Activated naive CD4-positive, alpha-beta T cell treated with anti-CD3 and anti-CD28 coated beads, Interleukin-2, amount 10 ng/mL, durations not matched to agents 7 days and 5 days (primary cell): ENCODE measurements at regions of chr4 and their contacts with region 1.

Region 1: DNA sequence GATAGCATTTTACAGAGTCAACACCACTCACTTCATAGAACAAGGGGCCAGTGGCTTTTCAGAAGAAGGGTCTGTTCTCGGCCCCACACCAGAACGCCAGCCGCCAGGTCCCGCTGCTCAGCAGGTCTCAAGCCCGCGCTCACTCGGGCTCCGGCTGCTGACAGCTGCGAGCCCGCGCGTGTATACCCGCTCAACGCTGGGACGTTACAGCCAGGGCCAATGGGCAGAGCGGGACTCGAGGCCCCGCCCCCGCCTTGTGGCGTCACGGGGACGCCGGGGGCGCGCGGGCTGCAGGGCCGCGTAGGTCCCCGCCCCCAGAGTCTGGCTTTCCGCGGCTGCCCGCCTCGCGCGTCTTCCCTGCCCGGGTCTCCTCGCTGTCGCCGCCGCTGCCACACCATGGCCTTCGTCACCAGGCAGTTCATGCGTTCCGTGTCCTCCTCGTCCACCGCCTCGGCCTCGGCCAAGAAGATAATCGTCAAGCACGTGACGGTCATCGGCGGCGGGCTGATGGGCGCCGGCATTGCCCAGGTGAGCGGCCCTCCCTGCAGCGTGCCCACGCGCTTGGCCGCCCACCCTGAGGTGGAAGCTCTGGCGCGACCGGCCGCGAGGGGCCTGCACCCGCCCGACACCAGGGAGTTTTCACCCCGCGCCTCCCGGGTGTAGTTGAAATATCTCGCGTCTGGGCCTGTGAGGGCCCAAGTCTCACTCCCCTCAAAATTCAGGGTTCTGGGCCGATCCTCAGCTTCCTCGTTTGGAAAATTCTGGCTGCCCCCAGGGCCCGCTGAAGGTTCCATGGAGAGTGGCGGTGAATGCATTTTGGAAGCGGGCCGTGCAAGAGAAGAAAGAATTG is at the start of gene HADH:
- DNase-seq: peak; percentile 95
- H3K4me3 Mint-ChIP-seq: peak within 1 kb of the TSS; percentile 95
- H3K27ac Mint-ChIP-seq: peak within 1 kb of the TSS; percentile 93
- H3K4me1 Mint-ChIP-seq: peaks cover 46% of the 10 kb centered on the region
- H3K27me3 Mint-ChIP-seq: no peaks in the 10 kb centered on the region

Region 2: GRCh38 chr4:107999932-108000539 is 10.3 kb after region 1 on chr4:
- CTCF ChIA-PET with region 1: interaction called, 11 read pairs
- DNase-seq: no peak
- H3K4me3 Mint-ChIP-seq: no peak overlapping the region
- H3K27ac Mint-ChIP-seq: no peak overlapping the region
- H3K4me1 Mint-ChIP-seq: peaks cover 25% of the 10 kb centered on the region
- H3K27me3 Mint-ChIP-seq: no peaks in the 10 kb centered on the region